Colonic mucosa (tissue), 4 donors: ENCODE measurements at regions of chr9 and their contacts with region 1.

Region 1: DNA sequence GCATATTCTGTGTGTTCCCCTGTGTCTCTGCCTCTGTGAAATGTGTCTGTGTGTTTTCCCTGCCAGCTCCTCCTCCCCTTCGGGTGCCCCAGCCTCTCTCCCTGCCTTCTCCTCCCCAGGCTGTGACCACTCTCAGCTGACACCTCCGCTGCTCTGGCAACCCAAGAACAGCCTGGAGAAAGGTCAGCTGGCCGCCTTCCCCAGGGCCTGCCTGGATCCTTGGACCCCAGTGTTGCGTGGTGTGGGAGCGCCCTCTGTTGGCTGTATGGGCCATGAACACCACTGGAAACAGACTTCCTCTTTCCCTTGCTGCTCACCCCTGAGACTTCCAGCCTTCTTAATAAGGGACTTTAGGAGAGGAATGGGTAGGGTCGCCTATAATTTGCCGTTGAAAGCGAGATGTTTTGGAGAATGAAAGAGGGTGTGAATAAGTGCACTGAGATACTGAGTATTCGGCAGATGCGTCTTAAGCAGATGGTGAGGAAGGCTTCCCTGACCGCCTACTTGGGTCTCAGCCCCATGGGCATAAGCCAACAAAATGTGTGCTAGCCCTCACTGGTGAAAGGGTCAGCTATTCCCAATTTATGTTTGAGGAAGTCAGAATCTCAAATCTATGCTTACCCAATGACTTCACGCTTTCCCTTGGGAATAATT is 114.9 kb upstream of the TRIM32 start:
- DNase-seq: peak; percentile 82
- H3K4me3 ChIP-seq: no peak overlapping the region
- H3K27ac ChIP-seq: no peak overlapping the region
- H3K4me1 ChIP-seq: peaks cover 2% of the 10 kb centered on the region
- H3K27me3 ChIP-seq: no peaks in the 10 kb centered on the region
- CTCF ChIP-seq: peak; percentile 81

Region 2: GRCh38 chr9:115591584-115591984 is 980.6 kb before region 1 on chr9:
- intact Hi-C with region 1: loop called (anchors 5 kb)
- DNase-seq: peak; percentile 57
- H3K4me3 ChIP-seq: no peak overlapping the region
- H3K27ac ChIP-seq: no peak overlapping the region
- H3K4me1 ChIP-seq: no peaks in the 10 kb centered on the region
- H3K27me3 ChIP-seq: no peaks in the 10 kb centered on the region
- CTCF ChIP-seq: no peak

Region 3: DNA sequence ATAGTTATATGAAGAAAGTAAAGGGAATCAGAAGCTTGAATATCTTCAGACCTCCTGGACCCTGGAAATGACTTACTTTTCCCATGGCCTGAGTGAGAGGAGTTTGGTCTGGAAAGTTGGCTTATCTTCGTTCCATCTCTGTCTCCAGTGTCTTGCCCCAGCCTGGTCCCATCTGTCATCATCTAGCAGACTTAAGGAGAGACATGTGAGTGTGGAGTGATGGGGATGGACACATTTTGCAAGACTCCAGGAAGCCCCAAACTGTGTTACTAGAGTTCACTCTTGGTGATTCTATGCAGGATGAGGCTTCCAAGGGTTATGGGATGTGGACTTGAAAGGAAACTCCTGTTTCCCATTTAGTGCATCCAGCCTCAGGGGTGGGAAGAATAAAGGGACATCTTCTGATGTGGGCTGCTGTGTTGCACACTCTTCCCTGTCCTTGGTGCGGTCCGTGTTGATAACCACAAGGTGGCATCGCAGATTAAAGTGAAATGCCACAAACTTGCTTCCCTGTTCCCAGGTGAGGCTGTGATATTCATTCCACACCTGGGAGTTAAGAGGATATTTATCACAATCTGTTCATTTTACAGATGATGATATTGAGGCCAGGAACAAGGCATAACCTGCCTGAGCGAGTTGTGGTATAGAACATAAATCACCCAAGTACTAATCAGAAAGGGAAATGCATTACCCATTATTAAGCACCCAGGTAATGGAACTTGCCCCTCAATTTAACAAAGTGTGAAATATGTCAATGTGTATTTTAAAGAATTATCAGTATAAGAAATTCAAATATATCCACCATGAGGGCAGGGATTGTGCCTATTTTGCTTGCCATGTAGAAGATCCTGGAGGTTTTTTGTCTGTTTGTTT is 688.5 kb before region 1 on chr9:
- intact Hi-C with region 1: loop called (anchors 5 kb)
- DNase-seq: peak; percentile 23
- H3K4me3 ChIP-seq: no peak overlapping the region
- H3K27ac ChIP-seq: no peak overlapping the region
- H3K4me1 ChIP-seq: no peaks in the 10 kb centered on the region
- H3K27me3 ChIP-seq: no peaks in the 10 kb centered on the region
- CTCF ChIP-seq: no peak

Region 4: GRCh38 chr9:116149844-116150243 is 422.4 kb before region 1 on chr9:
- intact Hi-C with region 1: loop called (anchors 5 kb)
- DNase-seq: peak; percentile 21
- H3K4me3 ChIP-seq: no peak overlapping the region
- H3K27ac ChIP-seq: no peak overlapping the region
- H3K4me1 ChIP-seq: no peaks in the 10 kb centered on the region
- H3K27me3 ChIP-seq: peaks cover 15% of the 10 kb centered on the region
- CTCF ChIP-seq: peak; percentile 55

Region 5: GRCh38 chr9:116163293-116164055 is 408.7 kb before region 1 on chr9:
- intact Hi-C with region 1: no loop called
- DNase-seq: no peak
- H3K4me3 ChIP-seq: no peak overlapping the region
- H3K27ac ChIP-seq: no peak overlapping the region
- H3K4me1 ChIP-seq: no peaks in the 10 kb centered on the region
- H3K27me3 ChIP-seq: no peaks in the 10 kb centered on the region
- CTCF ChIP-seq: peak; percentile 23

Region 6: DNA sequence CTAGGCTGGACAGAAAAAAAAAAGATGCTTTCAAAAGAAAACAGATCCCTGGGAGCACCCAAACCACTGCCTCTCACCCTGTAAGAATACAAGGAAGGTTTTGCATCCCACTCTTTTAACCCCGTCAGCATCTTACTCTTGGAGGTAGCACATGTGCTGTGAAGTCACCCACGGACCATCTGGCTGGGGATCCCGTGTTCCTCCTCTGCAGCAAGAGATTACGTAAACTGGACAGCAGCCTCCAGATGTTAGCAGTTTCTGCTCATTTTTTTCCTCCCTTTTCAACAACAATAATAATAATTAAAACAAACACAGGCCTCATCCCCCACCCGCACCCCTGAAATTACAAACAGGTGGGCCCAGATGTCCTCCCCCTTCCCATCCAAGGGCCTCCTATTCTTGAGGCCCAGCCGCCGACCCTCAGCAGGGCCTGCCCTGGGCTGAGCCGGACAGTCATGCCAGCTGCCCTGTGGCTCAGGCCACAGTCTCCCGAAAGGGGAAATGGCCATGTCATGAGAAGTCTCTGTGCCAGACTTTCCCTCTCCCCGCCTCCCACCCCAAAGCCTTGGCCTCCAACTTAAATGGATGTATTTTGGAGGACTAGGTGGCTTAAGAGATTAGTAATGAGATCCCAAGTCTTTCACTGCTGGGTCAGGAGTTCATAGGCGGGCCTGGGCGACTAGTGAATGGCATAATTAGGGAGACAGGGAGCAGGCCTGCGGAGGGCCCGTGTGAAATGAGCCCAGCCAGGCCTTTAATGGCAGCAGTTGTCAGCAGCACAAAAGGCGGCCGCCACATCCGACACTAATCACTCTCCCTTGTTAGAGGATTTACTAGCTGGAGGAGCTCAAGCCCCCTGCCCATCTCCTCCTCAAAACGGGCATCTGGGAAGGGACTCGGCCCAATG is 253.5 kb before region 1 on chr9:
- intact Hi-C with region 1: loop called (anchors 10 kb)
- DNase-seq: peak; percentile 17
- H3K4me3 ChIP-seq: no peak overlapping the region
- H3K27ac ChIP-seq: no peak overlapping the region
- H3K4me1 ChIP-seq: no peaks in the 10 kb centered on the region
- H3K27me3 ChIP-seq: no peaks in the 10 kb centered on the region
- CTCF ChIP-seq: no peak

Region 7: GRCh38 chr9:116482740-116483139 is 89.5 kb before region 1 on chr9:
- intact Hi-C with region 1: no loop called
- DNase-seq: no peak
- H3K4me3 ChIP-seq: no peak overlapping the region
- H3K27ac ChIP-seq: no peak overlapping the region
- H3K4me1 ChIP-seq: no peaks in the 10 kb centered on the region
- H3K27me3 ChIP-seq: no peaks in the 10 kb centered on the region
- CTCF ChIP-seq: no peak

Region 8: GRCh38 chr9:116494815-116495634 is 77.2 kb before region 1 on chr9:
- intact Hi-C with region 1: loop called (anchors 5 kb)
- DNase-seq: peak; percentile 63
- H3K4me3 ChIP-seq: no peak overlapping the region
- H3K27ac ChIP-seq: no peak overlapping the region
- H3K4me1 ChIP-seq: peaks cover 3% of the 10 kb centered on the region
- H3K27me3 ChIP-seq: no peaks in the 10 kb centered on the region
- CTCF ChIP-seq: peak; percentile 60